ENCODE measurements at regions of chr12 and their contacts with region 1.

Region 1: GRCh38 chr12:49707128-49707811 is at the start of gene FMNL3:
- DNase-seq: peak; percentile 97 to 99 (median 98)
- H3K4me3 ChIP-seq: peak within 1 kb of the TSS; percentile 66 to 71
- H3K4me3 Mint-ChIP-seq: peak within 1 kb of the TSS; percentile 90 to 95 (median 93)
- H3K27ac ChIP-seq: peak within 1 kb of the TSS; percentile 77
- H3K27ac Mint-ChIP-seq: peak within 1 kb of the TSS; percentile 87 to 95 (median 93)
- H3K4me1 ChIP-seq: peaks cover 40% of the 10 kb centered on the region
- H3K4me1 Mint-ChIP-seq: peaks cover 30 to 50% (median 39%) of the 10 kb centered on the region in 4 donors
- H3K27me3 ChIP-seq: no peaks in the 10 kb centered on the region
- H3K27me3 Mint-ChIP-seq: peaks cover 5 to 7% of the 10 kb centered on the region in 2 donors
- total RNA-seq, gene FMNL3: 27.9 to 28.1 TPM

Region 2: GRCh38 chr12:48917857-48918537 is 789.3 kb before region 1 on chr12:
- CTCF ChIA-PET with region 1: no interaction called
- POLR2A ChIA-PET with region 1: no interaction called
- intact Hi-C with region 1: no loop called
- DNase-seq: peak; percentile 55 to 66 (median 61)
- H3K4me3 ChIP-seq: peak overlapping the region; percentile 44 to 72
- H3K4me3 Mint-ChIP-seq: peak overlapping the region; percentile 91 to 99 (median 94)
- H3K27ac ChIP-seq: peak overlapping the region; percentile 65
- H3K27ac Mint-ChIP-seq: peak overlapping the region; percentile 72 to 97 (median 94)
- H3K4me1 ChIP-seq: peaks cover 50% of the 10 kb centered on the region
- H3K4me1 Mint-ChIP-seq: peaks cover 27 to 54% (median 39%) of the 10 kb centered on the region in 4 donors
- H3K27me3 ChIP-seq: no peaks in the 10 kb centered on the region
- H3K27me3 Mint-ChIP-seq: no peaks in the 10 kb centered on the region

Region 3: DNA sequence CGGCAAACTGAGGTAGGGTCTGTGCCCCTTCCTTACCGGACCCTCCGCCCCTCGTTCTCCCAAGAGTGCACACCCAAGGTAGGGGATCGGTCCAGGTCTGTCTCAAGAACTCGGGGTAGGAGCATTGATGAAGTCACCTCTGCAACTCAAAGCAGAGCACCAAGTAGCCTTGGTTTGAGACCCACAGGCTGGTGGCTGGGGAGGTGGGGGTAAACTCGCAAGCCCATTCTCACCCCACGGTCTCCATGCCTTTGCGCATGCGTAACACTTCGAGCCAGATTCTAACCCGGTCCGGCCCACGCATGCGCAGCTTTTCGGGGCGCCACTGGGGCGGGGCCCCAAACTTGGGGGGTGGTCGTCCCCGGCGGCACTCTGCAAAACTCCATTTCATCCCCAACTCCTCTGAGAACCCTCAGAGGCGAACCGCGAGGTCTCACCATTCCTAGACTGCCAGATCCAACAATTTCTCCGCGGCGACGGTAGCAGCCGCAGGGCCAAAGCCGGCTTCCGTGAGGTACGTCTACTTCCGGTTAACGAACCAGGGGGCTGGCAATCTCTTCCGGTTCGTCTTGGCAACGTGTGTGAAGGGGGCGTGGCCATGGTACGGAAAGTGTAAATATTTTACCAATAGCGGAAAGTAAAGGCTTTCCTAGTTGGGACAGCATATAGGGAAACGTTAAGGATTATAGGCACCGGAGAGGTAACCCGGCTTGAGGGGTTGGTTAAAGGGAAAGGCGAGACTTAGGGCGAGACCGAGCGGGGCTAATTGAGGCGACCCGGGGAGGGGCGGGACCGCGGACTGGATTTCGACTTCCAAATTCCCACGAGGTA is 139.4 kb before region 1 on chr12 and contains the start of gene MCRS1:
- CTCF ChIA-PET with region 1: no interaction called
- POLR2A ChIA-PET with region 1: interaction called, 3 read pairs
- intact Hi-C with region 1: loop called (anchors 1 kb)
- DNase-seq: peak; percentile 92 to 94 (median 93)
- H3K4me3 ChIP-seq: peak within 1 kb of the TSS; percentile 88 to 100
- H3K4me3 Mint-ChIP-seq: peak within 1 kb of the TSS; percentile 92 to 100 (median 99)
- H3K27ac ChIP-seq: peak within 1 kb of the TSS; percentile 89
- H3K27ac Mint-ChIP-seq: peak within 1 kb of the TSS; percentile 93 to 100 (median 99)
- H3K4me1 ChIP-seq: peaks cover 49% of the 10 kb centered on the region
- H3K4me1 Mint-ChIP-seq: peaks cover 32 to 71% (median 54%) of the 10 kb centered on the region in 4 donors
- H3K27me3 ChIP-seq: no peaks in the 10 kb centered on the region
- H3K27me3 Mint-ChIP-seq: no peaks in the 10 kb centered on the region
- total RNA-seq, gene MCRS1: 77.0 to 78.4 TPM

Region 4: DNA sequence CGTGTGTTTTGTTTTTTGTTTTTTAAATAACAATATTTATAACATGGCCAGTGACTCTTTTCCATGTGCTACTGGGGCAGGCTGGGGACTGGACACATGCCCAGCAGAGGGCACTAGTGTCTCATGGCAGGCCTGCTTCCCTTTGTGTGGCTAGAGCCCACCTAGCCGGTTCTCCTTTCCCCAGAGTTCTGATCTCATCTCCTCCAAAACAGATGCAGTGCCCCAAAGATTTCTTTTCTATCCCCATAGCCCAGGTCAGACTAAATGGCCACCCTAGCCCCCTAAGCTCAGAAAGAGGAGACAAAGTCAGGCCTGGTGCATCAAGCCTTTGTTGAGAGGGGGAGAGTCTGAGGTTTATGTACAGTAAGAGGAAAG is 62.7 kb before region 1 on chr12:
- CTCF ChIA-PET with region 1: interaction called, 543 read pairs
- POLR2A ChIA-PET with region 1: interaction called, 98 read pairs
- intact Hi-C with region 1: loop called (anchors 1 kb)
- DNase-seq: peak; percentile 79 to 85 (median 80)
- H3K4me3 ChIP-seq: no peak overlapping the region
- H3K4me3 Mint-ChIP-seq: peak overlapping the region in 3 of 8 donors; percentile 36 to 43 (median 37)
- H3K27ac ChIP-seq: peak overlapping the region; percentile 42
- H3K27ac Mint-ChIP-seq: peak overlapping the region; percentile 76 to 96 (median 93)
- H3K4me1 ChIP-seq: peaks cover 18% of the 10 kb centered on the region
- H3K4me1 Mint-ChIP-seq: peaks cover 13 to 35% (median 22%) of the 10 kb centered on the region in 4 donors
- H3K27me3 ChIP-seq: no peaks in the 10 kb centered on the region
- H3K27me3 Mint-ChIP-seq: no peaks in the 10 kb centered on the region

Region 5: GRCh38 chr12:49673446-49674317 is 33.6 kb before region 1 on chr12:
- CTCF ChIA-PET with region 1: interaction called, 69 read pairs
- POLR2A ChIA-PET with region 1: interaction called, 66 read pairs
- intact Hi-C with region 1: loop called (anchors 1 kb)
- DNase-seq: peak in 1 of 5 donors; percentile 12
- H3K4me3 ChIP-seq: no peak overlapping the region
- H3K4me3 Mint-ChIP-seq: peak overlapping the region in 7 of 8 donors; percentile 8 to 77 (median 46)
- H3K27ac ChIP-seq: peak overlapping the region; percentile 80
- H3K27ac Mint-ChIP-seq: peak overlapping the region; percentile 92 to 99 (median 97)
- H3K4me1 ChIP-seq: peaks cover 76% of the 10 kb centered on the region
- H3K4me1 Mint-ChIP-seq: peaks cover 68 to 85% (median 78%) of the 10 kb centered on the region in 4 donors
- H3K27me3 ChIP-seq: no peaks in the 10 kb centered on the region
- H3K27me3 Mint-ChIP-seq: no peaks in the 10 kb centered on the region

Region 6: GRCh38 chr12:50283229-50283923 is 576.1 kb after region 1 on chr12 and contains the start of gene LIMA1:
- CTCF ChIA-PET with region 1: no interaction called
- POLR2A ChIA-PET with region 1: no interaction called
- intact Hi-C with region 1: no loop called
- DNase-seq: peak; percentile 91 to 93 (median 91)
- H3K4me3 ChIP-seq: peak within 1 kb of the TSS; percentile 58 to 61
- H3K4me3 Mint-ChIP-seq: peak within 1 kb of the TSS; percentile 91 to 96 (median 92)
- H3K27ac ChIP-seq: peak within 1 kb of the TSS; percentile 70
- H3K27ac Mint-ChIP-seq: peak within 1 kb of the TSS; percentile 38 to 95 (median 87)
- H3K4me1 ChIP-seq: peaks cover 17% of the 10 kb centered on the region
- H3K4me1 Mint-ChIP-seq: peaks cover 9 to 18% (median 14%) of the 10 kb centered on the region in 4 donors
- H3K27me3 ChIP-seq: no peaks in the 10 kb centered on the region
- H3K27me3 Mint-ChIP-seq: no peaks in the 10 kb centered on the region
- total RNA-seq, gene LIMA1: 11.5 to 14.9 TPM

Measured in CD4-positive, alpha-beta memory T cell (primary cell).